H1 (cell line): ENCODE measurements at regions of chr3 and their contacts with region 1.

Region 1: DNA sequence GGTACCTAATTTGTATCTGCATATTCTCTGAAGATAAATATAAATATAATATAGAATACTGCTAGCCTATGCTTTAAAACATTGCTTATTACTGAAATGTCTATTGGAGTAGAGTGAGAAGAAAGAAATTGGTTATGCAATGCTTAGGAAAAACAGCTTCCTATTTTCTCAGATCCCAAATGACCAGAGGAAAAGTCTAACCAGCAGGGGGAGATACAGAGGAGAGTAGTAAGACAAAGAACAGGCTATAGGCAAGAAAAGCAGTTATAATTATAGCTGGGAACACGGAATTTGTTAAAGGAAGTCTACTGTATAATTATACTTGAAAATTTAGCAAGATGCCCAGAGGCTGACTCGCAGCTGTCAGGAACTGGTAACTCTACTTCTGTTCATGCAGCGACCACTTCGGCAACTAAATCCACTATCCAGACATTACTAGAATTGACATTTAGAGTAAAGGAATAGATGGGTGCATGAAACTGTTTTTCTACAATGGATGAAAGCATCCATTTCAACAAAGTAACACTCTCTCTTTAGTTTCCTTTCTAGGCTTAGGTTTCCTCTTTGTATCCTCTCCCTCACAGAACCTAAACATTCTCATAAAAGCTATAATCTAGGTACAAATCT is 97.2 kb downstream of the TBC1D5 start:
- DNase-seq: no peak
- H3K4me3 ChIP-seq: no peak overlapping the region
- H3K27ac ChIP-seq: no peak overlapping the region
- H3K4me1 ChIP-seq: no peaks in the 10 kb centered on the region; a peak in 1 of 7 replicates
- H3K27me3 ChIP-seq: no peaks in the 10 kb centered on the region
- CTCF ChIP-seq: peak in 2 of 3 experiments; percentile 53 to 60; a peak in 2 of 4 replicates
- EP300 ChIP-seq: no peak
- POLR2A ChIP-seq: no peak
- RAD21 ChIP-seq: peak; percentile 60

Region 2: GRCh38 chr3:17626395-17626794 is 18.8 kb before region 1 on chr3:
- CTCF ChIA-PET with region 1: interaction called, 17 read pairs
- POLR2A ChIA-PET with region 1: no interaction called
- DNase-seq: no peak
- H3K4me3 ChIP-seq: no peak overlapping the region
- H3K27ac ChIP-seq: no peak overlapping the region
- H3K4me1 ChIP-seq: peaks cover 0 to 8% (median 5%) of the 10 kb centered on the region in 4 experiments; a peak in 3 of 7 replicates
- H3K27me3 ChIP-seq: no peaks in the 10 kb centered on the region
- CTCF ChIP-seq: no peak
- EP300 ChIP-seq: no peak
- POLR2A ChIP-seq: no peak
- RAD21 ChIP-seq: no peak

Region 3: GRCh38 chr3:17634964-17635363 is 10.2 kb before region 1 on chr3:
- CTCF ChIA-PET with region 1: interaction called, 18 read pairs
- POLR2A ChIA-PET with region 1: no interaction called
- DNase-seq: no peak
- H3K4me3 ChIP-seq: no peak overlapping the region
- H3K27ac ChIP-seq: no peak overlapping the region
- H3K4me1 ChIP-seq: no peaks in the 10 kb centered on the region
- H3K27me3 ChIP-seq: no peaks in the 10 kb centered on the region
- CTCF ChIP-seq: no peak
- EP300 ChIP-seq: no peak
- POLR2A ChIP-seq: no peak
- RAD21 ChIP-seq: no peak

Region 4: GRCh38 chr3:17655743-17656142 is 10.6 kb after region 1 on chr3:
- CTCF ChIA-PET with region 1: interaction called, 20 read pairs
- POLR2A ChIA-PET with region 1: no interaction called
- DNase-seq: no peak
- H3K4me3 ChIP-seq: no peak overlapping the region
- H3K27ac ChIP-seq: no peak overlapping the region
- H3K4me1 ChIP-seq: no peaks in the 10 kb centered on the region
- H3K27me3 ChIP-seq: no peaks in the 10 kb centered on the region
- CTCF ChIP-seq: no peak
- EP300 ChIP-seq: no peak
- POLR2A ChIP-seq: no peak
- RAD21 ChIP-seq: no peak

Region 5: DNA sequence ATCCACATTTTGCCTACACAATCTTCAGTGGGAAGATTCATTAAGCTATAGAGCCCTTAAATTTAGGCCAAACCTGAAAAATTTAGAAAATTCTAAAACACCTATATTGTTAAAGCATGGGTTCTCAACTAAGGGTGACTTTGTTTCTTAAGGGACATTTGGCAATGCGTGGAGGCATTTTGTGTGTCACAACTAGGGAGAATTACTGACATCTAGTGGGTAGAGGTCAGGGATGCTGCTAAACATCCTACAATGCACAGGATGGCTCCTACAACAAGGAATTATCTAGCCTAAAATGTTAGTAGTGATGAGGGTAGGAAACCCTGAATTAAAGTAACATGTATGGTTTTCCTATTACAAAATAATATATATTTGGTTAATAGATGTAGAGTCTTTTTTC is 41.4 kb after region 1 on chr3:
- CTCF ChIA-PET with region 1: interaction called, 15 read pairs
- POLR2A ChIA-PET with region 1: no interaction called
- DNase-seq: no peak
- H3K4me3 ChIP-seq: no peak overlapping the region
- H3K27ac ChIP-seq: no peak overlapping the region
- H3K4me1 ChIP-seq: no peaks in the 10 kb centered on the region; a peak in 1 of 7 replicates
- H3K27me3 ChIP-seq: no peaks in the 10 kb centered on the region
- CTCF ChIP-seq: peak in 2 of 3 experiments; percentile 49 to 61; a peak in 3 of 4 replicates
- EP300 ChIP-seq: no peak
- POLR2A ChIP-seq: no peak
- RAD21 ChIP-seq: peak; percentile 76 to 78

Region 6: GRCh38 chr3:17831366-17831765 is 186.2 kb after region 1 on chr3:
- CTCF ChIA-PET with region 1: interaction called, 13 read pairs
- POLR2A ChIA-PET with region 1: no interaction called
- DNase-seq: no peak
- H3K4me3 ChIP-seq: no peak overlapping the region
- H3K27ac ChIP-seq: no peak overlapping the region
- H3K4me1 ChIP-seq: no peaks in the 10 kb centered on the region
- H3K27me3 ChIP-seq: no peaks in the 10 kb centered on the region
- CTCF ChIP-seq: no peak
- EP300 ChIP-seq: no peak
- POLR2A ChIP-seq: no peak
- RAD21 ChIP-seq: no peak

Region 7: GRCh38 chr3:17935222-17935621 is 290.0 kb after region 1 on chr3:
- CTCF ChIA-PET with region 1: no interaction called
- POLR2A ChIA-PET with region 1: no interaction called
- DNase-seq: no peak
- H3K4me3 ChIP-seq: no peak overlapping the region
- H3K27ac ChIP-seq: no peak overlapping the region
- H3K4me1 ChIP-seq: no peaks in the 10 kb centered on the region
- H3K27me3 ChIP-seq: no peaks in the 10 kb centered on the region
- CTCF ChIP-seq: no peak
- EP300 ChIP-seq: no peak
- POLR2A ChIP-seq: no peak
- RAD21 ChIP-seq: no peak